BJ (cell line): ENCODE measurements at regions of chr15 and their contacts with region 1.

Region 1: DNA sequence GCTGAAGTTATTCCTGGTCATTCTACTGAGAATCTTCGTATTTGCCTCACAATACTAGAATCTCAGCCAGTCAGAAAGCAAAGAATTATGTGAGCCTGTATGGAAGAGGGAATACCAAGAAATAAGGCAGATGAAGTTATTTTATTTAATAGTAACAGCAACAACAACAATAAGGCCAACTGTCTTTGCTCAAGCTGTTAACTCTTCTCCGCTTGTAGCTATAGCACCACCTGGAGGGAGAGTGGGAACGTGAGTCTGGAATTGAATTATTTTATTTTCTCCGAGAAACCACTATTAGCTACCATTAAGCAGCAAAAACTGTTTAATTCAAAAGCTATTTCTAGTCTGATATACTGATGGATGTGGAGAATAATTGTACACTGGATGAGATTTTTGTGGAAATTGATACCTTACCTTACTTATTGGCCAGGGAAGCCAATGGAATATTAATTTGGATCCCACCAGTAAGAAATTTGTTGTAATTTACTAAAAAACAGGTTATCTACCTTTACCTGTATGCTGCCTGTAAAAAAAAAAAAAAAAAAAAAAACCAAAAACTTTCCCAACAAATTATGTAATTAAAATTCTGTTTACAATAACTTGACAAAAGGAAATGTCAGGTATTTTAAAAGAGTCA is 50.1 kb downstream of the CALML4 start:
- DNase-seq: no peak
- H3K4me3 ChIP-seq: no peak overlapping the region
- H3K27me3 ChIP-seq: no peaks in the 10 kb centered on the region
- CTCF ChIP-seq: peak; percentile 78

Region 2: DNA sequence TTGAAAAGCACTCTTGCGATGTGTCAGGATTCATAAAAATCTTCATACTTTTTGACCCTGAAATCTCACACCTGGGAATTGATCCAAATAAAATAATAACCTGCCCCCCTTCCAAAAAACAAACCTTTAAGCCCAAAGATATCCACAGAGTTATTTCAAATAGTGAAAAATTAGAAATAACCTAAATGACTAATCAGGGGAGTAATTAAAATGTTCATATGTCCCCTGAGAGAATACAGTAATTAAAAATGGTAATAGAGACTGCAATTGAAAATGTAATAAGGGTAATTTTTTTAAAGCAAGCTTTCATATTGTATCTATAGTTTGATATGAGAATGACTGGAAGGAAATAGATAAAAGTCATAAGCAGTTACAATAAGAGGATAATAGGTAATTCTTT is 17.9 kb before region 1 on chr15:
- CTCF ChIA-PET with region 1: no interaction called
- POLR2A ChIA-PET with region 1: interaction called, 15 read pairs
- DNase-seq: no peak
- H3K4me3 ChIP-seq: no peak overlapping the region
- H3K27me3 ChIP-seq: no peaks in the 10 kb centered on the region
- CTCF ChIP-seq: no peak

Region 3: DNA sequence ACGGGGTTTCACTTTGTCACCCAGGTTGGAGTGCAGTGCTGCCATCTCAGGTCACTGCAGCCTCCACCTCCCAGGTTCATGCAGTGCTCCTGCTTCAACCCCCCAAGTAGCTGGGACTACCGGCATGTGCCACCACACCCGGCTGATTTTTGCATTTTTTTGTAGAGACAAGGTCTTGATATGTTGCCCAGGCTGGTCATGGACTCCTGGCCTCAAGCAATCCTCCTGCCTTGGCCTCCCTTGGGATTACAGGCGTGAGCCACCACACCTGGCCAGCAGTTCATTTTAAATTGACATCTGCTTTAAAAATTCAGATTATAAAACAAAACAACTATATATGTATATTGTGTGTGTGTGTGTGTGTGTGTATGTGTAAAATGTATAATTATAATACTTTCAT is 11.8 kb after region 1 on chr15:
- CTCF ChIA-PET with region 1: interaction called, 15 read pairs
- POLR2A ChIA-PET with region 1: no interaction called
- DNase-seq: no peak
- H3K4me3 ChIP-seq: no peak overlapping the region
- H3K27me3 ChIP-seq: no peaks in the 10 kb centered on the region
- CTCF ChIP-seq: no peak